ENCODE measurements at regions of chr5 and their contacts with region 1.

Region 1: DNA sequence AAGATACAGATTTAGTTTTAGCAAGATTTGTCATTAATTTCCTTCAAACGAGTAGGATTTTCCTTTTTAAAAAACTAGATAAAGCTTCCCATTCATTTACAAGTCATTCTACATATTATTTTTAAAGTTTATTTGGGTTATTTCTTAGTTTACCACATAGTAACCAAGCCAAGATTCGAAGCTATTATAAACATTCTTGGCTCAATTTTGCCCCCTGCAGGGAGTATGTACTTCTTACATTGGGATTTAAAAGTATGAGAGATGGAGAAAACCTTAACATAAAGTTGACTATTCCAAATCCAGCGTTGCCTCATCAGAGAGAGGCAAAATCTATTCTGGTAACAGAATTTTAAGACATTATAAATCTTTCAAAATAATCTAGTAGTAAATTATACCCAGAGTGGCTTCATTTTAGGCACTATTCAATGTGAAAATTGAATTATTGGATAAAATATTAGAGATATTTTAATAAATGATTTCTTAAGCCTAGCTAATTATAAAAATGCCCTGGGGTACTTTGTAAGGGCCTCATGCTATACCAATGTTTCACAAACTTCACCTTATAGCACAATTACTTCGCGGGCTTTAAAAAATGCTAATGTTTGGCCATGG is 39.1 kb downstream of the FBN2 start:
- DNase-seq: peak; percentile 53
- H3K4me3 ChIP-seq: no peak overlapping the region
- H3K27ac ChIP-seq: no peak overlapping the region
- H3K27me3 ChIP-seq: no peaks in the 10 kb centered on the region
- CTCF ChIP-seq: peak; percentile 44

Region 2: GRCh38 chr5:128228008-128228407 is 270.9 kb before region 1 on chr5:
- in situ Hi-C with region 1: loop called (anchors 25 kb)
- DNase-seq: peak; percentile 91
- H3K4me3 ChIP-seq: no peak overlapping the region
- H3K27ac ChIP-seq: peak overlapping the region; percentile 51
- H3K27me3 ChIP-seq: no peaks in the 10 kb centered on the region
- CTCF ChIP-seq: no peak